H1 (cell line): ENCODE measurements at regions of chr4 and their contacts with region 1.

Region 1: GRCh38 chr4:168153596-168154440 is 61.5 kb downstream of the ANXA10 start:
- DNase-seq: peak in 1 of 2 experiments; percentile 61
- H3K4me3 ChIP-seq: peak overlapping the region in 1 of 4 experiments; percentile 9; a peak in 1 of 8 replicates
- H3K27ac ChIP-seq: no peak overlapping the region
- H3K4me1 ChIP-seq: peaks cover 7 to 15% (median 13%) of the 10 kb centered on the region in 4 experiments; a peak in 5 of 7 replicates
- H3K27me3 ChIP-seq: no peaks in the 10 kb centered on the region
- CTCF ChIP-seq: peak; percentile 48 to 56 (median 49)
- EP300 ChIP-seq: no peak
- POLR2A ChIP-seq: no peak
- RAD21 ChIP-seq: peak; percentile 79 to 80

Region 2: GRCh38 chr4:167629272-167629671 is 524.5 kb before region 1 on chr4:
- CTCF ChIA-PET with region 1: interaction called, 10 read pairs
- POLR2A ChIA-PET with region 1: no interaction called
- DNase-seq: no peak
- H3K4me3 ChIP-seq: no peak overlapping the region
- H3K27ac ChIP-seq: no peak overlapping the region
- H3K4me1 ChIP-seq: no peaks in the 10 kb centered on the region
- H3K27me3 ChIP-seq: no peaks in the 10 kb centered on the region
- CTCF ChIP-seq: no peak
- EP300 ChIP-seq: no peak
- POLR2A ChIP-seq: no peak
- RAD21 ChIP-seq: no peak

Region 3: DNA sequence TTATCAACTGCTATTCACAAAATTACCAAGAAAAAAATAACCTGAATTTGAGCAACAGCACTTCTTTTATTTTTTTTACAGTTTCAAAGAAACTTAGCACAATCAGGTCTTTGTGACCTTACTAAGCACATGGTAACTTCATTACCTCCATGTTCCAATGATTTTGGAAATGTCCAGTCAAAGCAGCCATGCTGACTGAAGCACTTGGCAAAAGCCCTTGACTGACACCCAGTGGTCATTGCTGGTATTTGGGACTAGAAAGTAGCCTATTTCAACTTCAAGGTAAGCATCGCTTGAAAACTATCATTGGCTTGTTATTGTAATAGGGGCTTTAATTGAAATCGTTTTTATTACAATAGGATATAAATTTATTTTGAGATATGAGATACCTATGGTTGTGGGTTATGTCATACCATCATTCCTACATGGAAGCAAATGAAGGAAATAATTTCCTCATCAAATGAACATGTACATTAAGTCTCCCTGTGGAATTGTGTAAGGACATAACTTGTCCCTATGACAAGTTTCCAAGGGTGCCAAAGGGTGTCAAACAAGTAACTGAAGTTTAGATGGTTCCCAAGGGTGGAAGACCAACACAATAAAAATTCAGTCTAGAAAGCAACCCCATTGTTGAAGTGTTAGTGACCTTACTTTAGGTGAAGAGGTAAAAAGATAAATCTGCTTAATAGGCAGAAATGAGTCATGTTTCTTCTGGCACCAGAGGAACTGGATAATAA is 76.7 kb before region 1 on chr4:
- CTCF ChIA-PET with region 1: no interaction called
- POLR2A ChIA-PET with region 1: no interaction called
- DNase-seq: peak; percentile 36 to 84
- H3K4me3 ChIP-seq: no peak overlapping the region
- H3K27ac ChIP-seq: no peak overlapping the region
- H3K4me1 ChIP-seq: no peaks in the 10 kb centered on the region
- H3K27me3 ChIP-seq: no peaks in the 10 kb centered on the region
- CTCF ChIP-seq: peak; percentile 53 to 85 (median 81)
- EP300 ChIP-seq: no peak
- POLR2A ChIP-seq: no peak
- RAD21 ChIP-seq: peak; percentile 97 to 98

Region 4: GRCh38 chr4:168143601-168144000 is 10.2 kb before region 1 on chr4:
- CTCF ChIA-PET with region 1: interaction called, 21 read pairs
- POLR2A ChIA-PET with region 1: no interaction called
- DNase-seq: no peak
- H3K4me3 ChIP-seq: no peak overlapping the region
- H3K27ac ChIP-seq: no peak overlapping the region
- H3K4me1 ChIP-seq: no peaks in the 10 kb centered on the region
- H3K27me3 ChIP-seq: no peaks in the 10 kb centered on the region
- CTCF ChIP-seq: no peak
- EP300 ChIP-seq: no peak
- POLR2A ChIP-seq: no peak
- RAD21 ChIP-seq: no peak